PC-9 (cell line): ENCODE measurements at regions of chr1 and their contacts with region 1.

Region 1: DNA sequence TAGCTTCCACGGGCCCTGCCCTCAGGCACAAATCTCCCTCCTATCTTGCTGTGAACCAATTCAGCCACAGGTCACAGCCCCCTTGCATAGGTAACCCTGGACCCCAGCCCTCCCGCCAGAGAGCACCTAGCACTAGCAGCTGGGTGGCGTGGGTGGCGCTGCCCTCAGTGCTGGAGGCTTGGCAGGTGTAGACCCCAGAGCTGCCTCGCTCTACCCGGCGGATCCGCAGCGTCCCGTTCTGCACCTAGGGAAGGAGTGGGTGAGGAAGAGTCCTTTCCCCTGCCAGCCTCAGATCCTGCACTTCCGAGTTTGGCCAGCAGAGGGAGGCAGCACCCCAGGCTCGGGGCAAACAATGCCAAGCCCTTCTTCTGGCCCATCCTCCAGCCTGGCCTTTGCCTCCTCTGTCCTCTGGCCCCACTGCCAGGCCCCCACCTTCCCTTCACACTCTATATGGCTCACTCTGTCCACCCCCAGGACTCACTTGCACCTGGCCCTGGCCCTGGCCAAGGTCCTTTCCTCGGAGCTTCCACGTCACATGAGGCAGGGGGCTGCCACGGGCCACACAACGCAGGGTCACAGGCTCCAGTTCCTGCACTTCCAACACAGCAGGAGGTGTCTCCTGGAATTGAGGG is 9.0 kb downstream of the IGSF9 start:
- DNase-seq: peak in 1 of 2 experiments; percentile 82
- H3K4me3 ChIP-seq: no peak overlapping the region
- H3K27ac ChIP-seq: peak overlapping the region; percentile 56; the same call in 1 of the 2 replicates
- H3K4me1 ChIP-seq: peaks cover 35% of the 10 kb centered on the region
- H3K27me3 ChIP-seq: no peaks in the 10 kb centered on the region
- CTCF ChIP-seq: peak; percentile 95

Region 2: GRCh38 chr1:159798893-159799292 is 137.5 kb before region 1 on chr1:
- CTCF ChIA-PET with region 1: interaction called, 3 read pairs
- POLR2A ChIA-PET with region 1: no interaction called
- intact Hi-C with region 1: loop called (anchors 2 kb)
- DNase-seq: peak; percentile 61 to 70
- H3K4me3 ChIP-seq: no peak overlapping the region
- H3K27ac ChIP-seq: no peak overlapping the region
- H3K4me1 ChIP-seq: no peaks in the 10 kb centered on the region
- H3K27me3 ChIP-seq: peaks cover 19% of the 10 kb centered on the region
- CTCF ChIP-seq: peak; percentile 74

Region 3: DNA sequence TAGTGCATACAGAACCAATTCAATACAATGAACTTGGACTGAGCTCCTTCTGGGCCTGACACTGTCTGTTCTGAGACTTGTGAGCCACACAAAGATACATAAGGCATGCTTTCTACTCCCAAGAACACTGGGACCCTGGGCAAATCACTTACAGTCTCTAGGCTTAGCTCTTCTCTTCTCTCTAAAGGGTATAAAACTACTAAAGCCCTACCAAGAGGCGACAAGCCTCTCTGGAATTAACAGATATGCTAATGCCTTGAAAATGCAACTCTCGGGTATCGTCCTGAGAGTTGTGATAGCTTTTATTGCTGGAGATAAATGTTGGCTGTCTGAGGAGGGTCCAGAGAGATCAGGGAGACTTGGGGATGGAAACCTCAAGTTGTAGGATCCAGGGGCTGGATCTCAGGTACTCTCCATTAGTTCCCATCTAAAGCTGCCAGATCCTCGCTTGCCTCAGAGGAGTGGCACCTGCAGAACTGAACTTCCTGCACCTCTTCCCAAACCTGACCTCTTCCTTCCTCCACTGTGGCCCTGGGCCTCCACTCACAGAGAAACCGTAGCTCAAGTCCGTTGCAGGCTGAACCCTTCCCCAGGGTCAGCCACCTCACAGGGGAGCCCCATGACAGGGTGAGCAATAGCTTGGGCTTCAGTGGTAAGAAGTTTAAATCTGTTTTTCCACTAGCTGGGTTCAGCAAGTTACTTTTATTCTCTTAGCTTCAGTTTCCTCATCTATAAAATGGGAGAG is 24.9 kb before region 1 on chr1:
- CTCF ChIA-PET with region 1: no interaction called
- POLR2A ChIA-PET with region 1: no interaction called
- intact Hi-C with region 1: no loop called
- DNase-seq: no peak
- H3K4me3 ChIP-seq: no peak overlapping the region
- H3K27ac ChIP-seq: peak overlapping the region; percentile 78
- H3K4me1 ChIP-seq: peaks cover 99% of the 10 kb centered on the region
- H3K27me3 ChIP-seq: no peaks in the 10 kb centered on the region
- CTCF ChIP-seq: no peak